Activated CD4-positive, alpha-beta memory T cell treated with anti-CD3 and anti-CD28 coated beads, Interleukin-2, amount 10 ng/mL, durations not matched to agents 7 days and 5 days (primary cell): ENCODE measurements at regions of chr15 and their contacts with region 1.

Region 1: GRCh38 chr15:38538372-38539343 is 26.0 kb downstream of the RASGRP1 start:
- DNase-seq: no peak
- H3K4me3 Mint-ChIP-seq: peak overlapping the region; percentile 49
- H3K27ac Mint-ChIP-seq: peak overlapping the region; percentile 79
- H3K4me1 Mint-ChIP-seq: peaks cover 94% of the 10 kb centered on the region
- H3K27me3 Mint-ChIP-seq: no peaks in the 10 kb centered on the region

Region 2: GRCh38 chr15:38554354-38554753 is 15.7 kb after region 1 on chr15:
- CTCF ChIA-PET with region 1: interaction called, 3 read pairs
- POLR2A ChIA-PET with region 1: interaction called, 23 read pairs
- DNase-seq: no peak
- H3K4me3 Mint-ChIP-seq: no peak overlapping the region
- H3K27ac Mint-ChIP-seq: peak overlapping the region; percentile 92
- H3K4me1 Mint-ChIP-seq: peaks cover 88% of the 10 kb centered on the region
- H3K27me3 Mint-ChIP-seq: no peaks in the 10 kb centered on the region

Region 3: DNA sequence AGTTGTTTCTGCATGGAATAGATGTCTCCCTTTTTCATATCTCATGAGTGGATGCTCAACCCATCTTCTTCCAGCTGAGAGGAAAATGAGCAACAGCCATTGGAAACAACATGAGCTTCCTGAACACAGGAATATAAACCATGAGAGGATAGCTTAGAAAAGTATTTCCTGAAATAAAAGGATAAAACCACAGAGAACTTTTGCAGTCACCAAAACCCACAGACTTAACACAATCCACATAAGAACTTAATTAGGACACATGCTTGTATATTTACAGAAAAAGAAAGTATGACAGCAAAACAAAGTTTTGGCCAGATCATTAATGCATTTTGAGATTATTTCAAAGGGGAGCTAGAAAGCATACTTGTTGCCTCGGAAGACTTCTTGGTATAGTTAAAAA is 206.5 kb after region 1 on chr15:
- CTCF ChIA-PET with region 1: no interaction called
- POLR2A ChIA-PET with region 1: no interaction called
- DNase-seq: no peak
- H3K4me3 Mint-ChIP-seq: no peak overlapping the region
- H3K27ac Mint-ChIP-seq: no peak overlapping the region
- H3K4me1 Mint-ChIP-seq: no peaks in the 10 kb centered on the region
- H3K27me3 Mint-ChIP-seq: peaks cover 6% of the 10 kb centered on the region